ENCODE measurements at regions of chr12 and their contacts with region 1.

Region 1: GRCh38 chr12:69966409-69967207 is 141.6 kb downstream of the MYRFL start:
- DNase-seq: peak; percentile 99
- H3K4me3 ChIP-seq: no peak overlapping the region
- H3K27ac ChIP-seq: peak overlapping the region; percentile 100
- H3K4me1 ChIP-seq: peaks cover 20% of the 10 kb centered on the region
- H3K27me3 ChIP-seq: no peaks in the 10 kb centered on the region
- CTCF ChIP-seq: no peak

Region 2: GRCh38 chr12:69985656-69986055 is 19.0 kb after region 1 on chr12:
- CTCF ChIA-PET with region 1: no interaction called
- dilution Hi-C with region 1: no loop called
- in situ Hi-C with region 1: no loop called
- intact Hi-C with region 1: loop called (anchors 1 kb)
- DNase-seq: no peak
- H3K4me3 ChIP-seq: no peak overlapping the region
- H3K27ac ChIP-seq: no peak overlapping the region
- H3K4me1 ChIP-seq: peaks cover 11% of the 10 kb centered on the region
- H3K27me3 ChIP-seq: no peaks in the 10 kb centered on the region
- CTCF ChIP-seq: peak; percentile 36 to 42

Region 3: GRCh38 chr12:70121557-70121956 is 154.9 kb after region 1 on chr12:
- CTCF ChIA-PET with region 1: no interaction called
- dilution Hi-C with region 1: no loop called
- in situ Hi-C with region 1: no loop called
- intact Hi-C with region 1: loop called (anchors 1 kb)
- DNase-seq: peak; percentile 65
- H3K4me3 ChIP-seq: no peak overlapping the region
- H3K27ac ChIP-seq: no peak overlapping the region
- H3K4me1 ChIP-seq: peaks cover 10% of the 10 kb centered on the region
- H3K27me3 ChIP-seq: no peaks in the 10 kb centered on the region
- CTCF ChIP-seq: no peak

Region 4: GRCh38 chr12:70393787-70394499 is 427.3 kb after region 1 on chr12:
- CTCF ChIA-PET with region 1: no interaction called
- dilution Hi-C with region 1: no loop called
- in situ Hi-C with region 1: no loop called
- intact Hi-C with region 1: no loop called
- DNase-seq: peak; percentile 41
- H3K4me3 ChIP-seq: no peak overlapping the region
- H3K27ac ChIP-seq: no peak overlapping the region
- H3K4me1 ChIP-seq: peaks cover 9% of the 10 kb centered on the region
- H3K27me3 ChIP-seq: no peaks in the 10 kb centered on the region
- CTCF ChIP-seq: no peak